ENCODE measurements at regions of chr19 and their contacts with region 1.

Region 1: DNA sequence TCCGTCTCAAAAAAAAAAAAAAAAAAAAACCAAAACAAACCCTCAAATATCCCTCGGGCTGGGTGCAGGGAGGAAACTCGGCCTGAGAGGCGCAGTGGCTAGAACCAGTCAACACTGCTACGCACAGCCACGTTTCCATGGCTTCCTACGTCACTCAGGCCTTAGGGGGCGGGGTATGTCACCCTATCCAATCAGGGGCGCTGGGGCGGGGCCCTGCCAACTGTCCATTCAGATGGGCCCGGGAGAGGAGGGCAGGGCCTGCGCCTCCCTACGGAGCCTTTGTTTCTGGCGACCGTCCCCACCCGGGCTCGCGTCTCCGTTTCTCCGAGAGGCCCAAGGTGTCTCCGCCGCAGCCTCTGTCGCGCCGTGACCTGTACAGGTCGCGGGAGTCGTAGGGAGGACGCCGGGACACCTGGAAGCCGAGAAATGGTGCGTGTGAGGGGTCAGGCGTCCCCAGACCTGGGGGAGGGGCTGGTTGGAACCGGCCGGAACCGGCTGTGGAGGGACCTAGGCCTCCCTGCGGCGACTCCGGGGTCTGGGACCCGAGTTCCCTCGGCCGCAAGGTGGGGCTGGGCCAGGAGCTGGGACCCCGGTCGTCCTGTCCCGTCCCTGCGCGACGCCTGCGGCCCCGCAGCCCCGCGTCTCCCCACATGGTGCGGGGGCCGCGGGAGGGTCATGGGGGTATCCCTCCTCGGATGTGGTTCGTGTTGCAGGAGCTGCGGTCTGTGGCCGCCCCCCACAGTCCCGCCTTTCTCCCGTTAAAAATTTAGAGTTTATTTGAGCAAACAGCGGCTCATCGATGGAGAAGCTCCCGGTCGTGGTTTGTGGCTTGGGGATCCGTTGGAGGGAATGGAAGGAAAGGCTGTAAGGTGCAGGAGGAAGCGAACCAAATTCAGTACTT is at the start of gene ZNF627:
- DNase-seq: peak; percentile 94 to 99 (median 98)
- ATAC-seq: peak; percentile 99
- H3K4me3 ChIP-seq: peak within 1 kb of the TSS; percentile 97 to 98
- H3K4me3 Mint-ChIP-seq: peak within 1 kb of the TSS; percentile 88
- H3K27ac ChIP-seq: peak within 1 kb of the TSS; percentile 89
- H3K27ac Mint-ChIP-seq: peak within 1 kb of the TSS; percentile 92
- H3K4me1 ChIP-seq: peaks cover 16% of the 10 kb centered on the region
- H3K4me1 Mint-ChIP-seq: peaks cover 32% of the 10 kb centered on the region
- H3K27me3 ChIP-seq: no peaks in the 10 kb centered on the region
- H3K27me3 Mint-ChIP-seq: no peaks in the 10 kb centered on the region
- CTCF ChIP-seq: no peak
- total RNA-seq, gene ZNF627: 10.7 to 11.0 TPM

Region 2: DNA sequence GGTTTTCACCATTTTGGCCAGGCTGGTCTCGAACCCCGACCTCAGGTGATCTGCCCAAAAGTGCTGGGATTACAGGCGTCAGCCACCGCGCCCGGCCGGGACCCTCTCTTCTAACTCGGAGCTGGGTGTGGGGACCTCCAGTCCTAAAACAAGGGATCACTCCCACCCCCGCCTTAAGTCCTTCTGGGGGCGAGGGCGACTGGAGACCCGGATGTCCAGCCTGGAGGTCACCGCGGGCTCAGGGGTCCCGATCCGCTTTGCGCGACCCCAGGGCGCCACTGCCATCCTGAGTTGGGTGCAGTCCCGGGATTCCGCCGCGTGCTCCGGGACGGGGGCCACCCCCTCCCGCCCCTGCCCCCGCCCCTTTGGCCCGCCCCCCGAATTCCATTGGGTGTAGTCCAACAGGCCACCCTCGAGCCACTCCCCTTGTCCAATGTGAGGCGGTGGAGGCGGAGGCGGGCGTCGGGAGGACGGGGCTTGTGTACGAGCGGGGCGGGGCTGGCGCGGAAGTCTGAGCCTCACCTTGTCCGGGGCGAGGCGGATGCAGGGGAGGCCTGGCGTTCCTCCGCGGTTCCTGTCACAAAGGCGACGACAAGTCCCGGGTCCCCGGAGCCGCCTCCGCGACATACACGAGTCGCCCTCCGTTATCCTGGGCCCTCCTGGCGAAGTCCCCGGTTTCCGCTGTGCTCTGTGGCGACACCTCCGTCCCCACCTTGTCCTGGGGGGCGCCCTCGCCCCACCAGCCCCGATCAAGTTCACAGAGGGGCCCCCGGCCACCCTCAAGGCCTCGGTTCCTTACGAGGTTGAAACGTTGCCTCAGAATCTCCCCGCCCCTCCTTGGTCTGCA is 507.2 kb before region 1 on chr19:
- CTCF ChIA-PET with region 1: no interaction called
- POLR2A ChIA-PET with region 1: no interaction called
- intact Hi-C with region 1: loop called in 1 of 2 experiments (anchors 1 kb)
- DNase-seq: peak; percentile 95 to 98 (median 98)
- ATAC-seq: peak; percentile 84
- H3K4me3 ChIP-seq: peak overlapping the region; percentile 78 to 93
- H3K4me3 Mint-ChIP-seq: peak overlapping the region; percentile 86
- H3K27ac ChIP-seq: peak overlapping the region; percentile 97 to 99
- H3K27ac Mint-ChIP-seq: peak overlapping the region; percentile 96
- H3K4me1 ChIP-seq: peaks cover 44% of the 10 kb centered on the region
- H3K4me1 Mint-ChIP-seq: peaks cover 47% of the 10 kb centered on the region
- H3K27me3 ChIP-seq: no peaks in the 10 kb centered on the region
- H3K27me3 Mint-ChIP-seq: no peaks in the 10 kb centered on the region
- CTCF ChIP-seq: no peak

Region 3: DNA sequence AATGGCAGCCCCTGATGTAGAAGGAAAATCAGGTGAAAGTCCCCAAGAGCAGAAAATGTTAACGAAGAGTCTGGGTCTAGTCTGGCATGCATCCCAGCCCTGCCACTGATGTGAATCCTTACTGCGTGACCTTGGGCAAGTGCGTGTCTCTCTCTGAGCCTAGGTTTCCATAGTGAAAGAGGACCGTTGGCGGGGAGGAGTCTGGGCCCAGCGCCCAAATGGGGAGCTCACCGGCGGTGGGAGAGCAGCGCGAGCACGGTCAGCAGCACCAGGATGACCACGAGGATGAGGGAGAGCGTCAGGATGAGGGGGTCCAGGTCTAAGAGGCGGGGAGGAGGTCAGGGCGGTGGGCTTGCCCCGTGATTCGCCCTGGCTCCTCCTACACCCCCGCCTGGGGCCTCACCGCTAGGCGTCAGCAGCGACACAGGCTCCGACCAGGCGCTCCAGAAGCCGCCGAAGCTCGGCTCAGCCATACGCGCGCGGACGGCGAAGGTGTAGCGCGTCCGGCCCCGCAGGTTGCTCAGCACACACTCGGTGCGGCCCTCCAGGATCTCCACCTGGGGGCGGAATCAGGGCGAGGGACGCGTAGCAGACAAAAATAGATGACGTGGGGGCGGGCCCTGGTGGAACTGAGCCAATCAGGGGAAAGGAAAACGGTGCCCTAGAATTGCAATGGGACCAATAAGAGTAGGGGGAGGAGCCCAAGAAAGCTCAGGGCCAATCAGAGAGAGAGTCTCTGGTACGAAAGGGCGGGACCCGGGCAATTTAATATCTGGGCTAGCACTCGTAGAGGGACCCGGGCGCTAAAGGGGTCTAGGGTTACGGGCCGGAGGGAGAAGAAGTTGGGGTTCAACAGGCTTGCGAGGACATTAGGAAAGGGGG is 216.6 kb before region 1 on chr19:
- CTCF ChIA-PET with region 1: no interaction called
- POLR2A ChIA-PET with region 1: no interaction called
- intact Hi-C with region 1: loop called in 1 of 2 experiments (anchors 5 kb)
- DNase-seq: peak; percentile 93 to 99 (median 96)
- ATAC-seq: peak; percentile 83
- H3K4me3 ChIP-seq: peak overlapping the region; percentile 64 to 72
- H3K4me3 Mint-ChIP-seq: peak overlapping the region; percentile 94
- H3K27ac ChIP-seq: peak overlapping the region; percentile 80 to 89
- H3K27ac Mint-ChIP-seq: peak overlapping the region; percentile 99
- H3K4me1 ChIP-seq: peaks cover 47% of the 10 kb centered on the region
- H3K4me1 Mint-ChIP-seq: peaks cover 45% of the 10 kb centered on the region
- H3K27me3 ChIP-seq: peaks cover 6 to 23% of the 10 kb centered on the region in 2 experiments
- H3K27me3 Mint-ChIP-seq: peaks cover 19% of the 10 kb centered on the region
- CTCF ChIP-seq: peak; percentile 88

Region 4: DNA sequence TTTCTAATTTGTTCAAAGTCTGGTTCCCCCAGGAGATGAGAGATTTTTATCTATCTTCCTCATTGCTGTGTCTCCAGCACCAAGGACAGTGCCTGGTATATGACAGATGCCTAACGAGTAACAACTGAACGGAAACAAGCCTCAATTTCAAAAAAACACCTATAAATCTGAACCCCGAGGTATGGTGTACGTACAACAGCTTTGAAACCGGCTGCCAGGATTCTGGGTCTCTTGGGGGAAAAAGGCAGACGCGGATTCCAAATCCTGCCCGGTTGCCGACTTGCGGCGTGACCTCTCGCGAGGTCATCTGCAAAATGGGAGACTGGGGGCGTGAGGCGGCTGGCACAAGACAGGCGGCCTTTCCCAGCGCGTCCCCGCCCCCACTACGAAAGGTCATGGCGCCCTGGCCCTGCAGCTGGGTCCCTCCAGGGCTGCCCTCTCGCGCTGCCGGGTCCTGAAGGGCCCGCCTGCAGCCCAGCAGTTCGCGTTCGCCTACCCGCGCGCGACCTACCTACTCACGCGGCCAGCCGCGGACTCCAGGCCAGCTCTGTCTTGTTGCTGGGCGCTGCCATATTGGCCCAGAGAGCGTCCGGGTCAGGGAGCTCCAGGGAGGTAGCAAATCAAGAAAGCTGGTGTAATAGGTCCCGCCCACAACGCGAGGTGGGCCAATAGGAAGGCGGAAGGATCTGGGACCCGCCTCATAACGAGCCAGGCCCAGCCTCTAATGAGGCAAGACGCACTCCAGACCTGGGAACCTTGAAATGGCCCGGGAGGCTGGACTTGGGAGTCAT is 68.7 kb before region 1 on chr19 and contains the start of gene ECSIT:
- CTCF ChIA-PET with region 1: no interaction called
- POLR2A ChIA-PET with region 1: no interaction called
- intact Hi-C with region 1: loop called in 1 of 2 experiments (anchors 2 kb)
- DNase-seq: peak; percentile 83 to 96 (median 91)
- ATAC-seq: peak; percentile 98
- H3K4me3 ChIP-seq: peak within 1 kb of the TSS; percentile 85 to 92
- H3K4me3 Mint-ChIP-seq: peak within 1 kb of the TSS; percentile 97
- H3K27ac ChIP-seq: peak within 1 kb of the TSS; percentile 62 to 89
- H3K27ac Mint-ChIP-seq: peak within 1 kb of the TSS; percentile 96
- H3K4me1 ChIP-seq: peaks cover 19% of the 10 kb centered on the region
- H3K4me1 Mint-ChIP-seq: peaks cover 16% of the 10 kb centered on the region
- H3K27me3 ChIP-seq: no peaks in the 10 kb centered on the region
- H3K27me3 Mint-ChIP-seq: no peaks in the 10 kb centered on the region
- CTCF ChIP-seq: no peak
- total RNA-seq, gene ECSIT: 31.1 to 32.4 TPM

Region 5: GRCh38 chr19:11558881-11559828 is 38.3 kb before region 1 on chr19 and contains the start of gene ELOF1:
- CTCF ChIA-PET with region 1: interaction called, 3 read pairs
- POLR2A ChIA-PET with region 1: interaction called, 5 read pairs
- intact Hi-C with region 1: loop called (anchors 1 kb)
- DNase-seq: peak; percentile 90 to 99 (median 97)
- ATAC-seq: peak; percentile 94
- H3K4me3 ChIP-seq: peak within 1 kb of the TSS; percentile 83 to 87
- H3K4me3 Mint-ChIP-seq: peak within 1 kb of the TSS; percentile 93
- H3K27ac ChIP-seq: peak within 1 kb of the TSS; percentile 74 to 78
- H3K27ac Mint-ChIP-seq: peak within 1 kb of the TSS; percentile 93
- H3K4me1 ChIP-seq: peaks cover 29% of the 10 kb centered on the region
- H3K4me1 Mint-ChIP-seq: peaks cover 39% of the 10 kb centered on the region
- H3K27me3 ChIP-seq: no peaks in the 10 kb centered on the region
- H3K27me3 Mint-ChIP-seq: no peaks in the 10 kb centered on the region
- CTCF ChIP-seq: no peak
- total RNA-seq, gene ELOF1: 40.3 to 41.0 TPM

Region 6: DNA sequence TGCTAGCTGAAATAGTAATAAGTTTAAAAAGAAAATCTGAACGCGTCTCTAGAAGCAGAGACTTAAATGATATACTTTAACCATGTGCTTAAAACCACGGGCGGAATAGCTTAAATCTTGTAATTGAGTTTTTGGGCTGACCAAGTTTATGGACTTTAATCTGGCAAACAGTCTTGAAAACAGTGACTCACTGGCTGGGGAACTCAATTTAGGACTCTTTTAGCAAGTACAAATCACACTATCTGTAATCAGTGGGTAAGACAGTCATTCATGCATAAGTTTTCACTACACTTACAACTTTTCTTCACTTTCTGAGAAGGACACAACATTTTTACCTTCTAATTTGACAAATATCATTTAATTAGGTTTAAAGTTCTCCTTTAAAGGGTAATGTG is 26.6 kb after region 1 on chr19:
- CTCF ChIA-PET with region 1: no interaction called
- POLR2A ChIA-PET with region 1: no interaction called
- intact Hi-C with region 1: loop called in 1 of 2 experiments (anchors 1 kb)
- DNase-seq: no peak
- ATAC-seq: no peak
- H3K4me3 ChIP-seq: peak overlapping the region in 1 of 2 experiments; percentile 1
- H3K4me3 Mint-ChIP-seq: no peak overlapping the region
- H3K27ac ChIP-seq: no peak overlapping the region
- H3K27ac Mint-ChIP-seq: no peak overlapping the region
- H3K4me1 ChIP-seq: peaks cover 8% of the 10 kb centered on the region
- H3K4me1 Mint-ChIP-seq: peaks cover 15% of the 10 kb centered on the region
- H3K27me3 ChIP-seq: no peaks in the 10 kb centered on the region
- H3K27me3 Mint-ChIP-seq: no peaks in the 10 kb centered on the region
- CTCF ChIP-seq: no peak

Region 7: GRCh38 chr19:11639602-11640471 is 42.4 kb after region 1 on chr19:
- CTCF ChIA-PET with region 1: no interaction called
- POLR2A ChIA-PET with region 1: no interaction called
- intact Hi-C with region 1: loop called in 1 of 2 experiments (anchors 1 kb)
- DNase-seq: peak; percentile 73 to 90 (median 82)
- ATAC-seq: peak; percentile 100
- H3K4me3 ChIP-seq: peak overlapping the region; percentile 48 to 73
- H3K4me3 Mint-ChIP-seq: peak overlapping the region; percentile 74
- H3K27ac ChIP-seq: no peak overlapping the region
- H3K27ac Mint-ChIP-seq: no peak overlapping the region
- H3K4me1 ChIP-seq: peaks cover 8% of the 10 kb centered on the region
- H3K4me1 Mint-ChIP-seq: peaks cover 5% of the 10 kb centered on the region
- H3K27me3 ChIP-seq: peaks cover 5 to 11% of the 10 kb centered on the region in 2 experiments
- H3K27me3 Mint-ChIP-seq: peaks cover 15% of the 10 kb centered on the region
- CTCF ChIP-seq: no peak

Measured in CD8-positive, alpha-beta T cell (primary cell).